PC-9 (cell line): ENCODE measurements at regions of chr20 and their contacts with region 1.

Region 1: DNA sequence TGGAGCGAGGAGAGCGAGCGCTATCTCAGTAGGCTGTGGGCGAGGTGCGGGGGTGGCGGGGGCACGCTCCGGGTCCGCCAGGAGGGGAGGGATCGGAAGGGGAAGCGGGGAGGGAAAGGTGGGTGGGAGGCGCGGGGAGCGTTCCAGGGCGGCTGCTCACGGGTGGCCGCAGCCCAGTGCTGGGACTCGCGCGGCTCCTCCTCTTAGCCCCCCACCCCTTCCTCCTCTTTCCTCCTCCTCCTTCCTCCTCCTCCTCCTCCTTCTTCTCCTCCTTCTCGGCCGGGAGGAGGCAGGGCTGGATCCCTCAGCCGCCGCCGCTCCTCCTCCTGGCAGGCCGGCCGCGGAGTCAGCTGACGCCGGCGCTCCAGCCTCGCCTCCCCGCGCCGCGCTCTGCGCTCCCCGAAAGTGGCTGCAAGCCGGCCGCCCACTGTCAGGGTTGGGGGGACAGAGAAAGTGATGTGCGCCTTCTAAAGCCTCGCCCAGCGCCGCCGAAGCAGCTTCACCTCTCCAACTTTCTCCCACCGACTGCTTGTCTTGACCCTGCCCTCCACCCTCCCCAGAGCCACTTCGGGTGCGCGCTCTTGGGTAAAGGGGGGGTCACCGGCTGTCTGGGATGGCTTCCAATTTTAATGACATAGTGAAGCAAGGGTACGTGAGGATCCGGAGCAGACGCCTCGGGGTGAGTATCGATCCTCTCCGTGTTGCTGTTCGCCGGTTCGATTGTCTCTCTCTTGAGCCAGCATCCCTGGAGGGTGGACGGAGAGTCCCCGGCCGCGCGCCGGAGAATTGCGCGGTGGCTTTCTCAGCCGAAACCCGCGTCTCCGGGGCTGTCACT is at the start of gene DOK5:
- DNase-seq: no peak
- H3K4me3 ChIP-seq: no peak within 1 kb of the TSS
- H3K27ac ChIP-seq: no peak within 1 kb of the TSS
- H3K4me1 ChIP-seq: no peaks in the 10 kb centered on the region
- H3K27me3 ChIP-seq: peaks cover 18% of the 10 kb centered on the region
- CTCF ChIP-seq: no peak
- total RNA-seq, gene DOK5: not detected in 2 replicates

Region 2: GRCh38 chr20:54207743-54208547 is 267.6 kb before region 1 on chr20 and contains the start of gene PFDN4:
- CTCF ChIA-PET with region 1: interaction called, 10 read pairs
- POLR2A ChIA-PET with region 1: no interaction called
- intact Hi-C with region 1: no loop called
- DNase-seq: peak; percentile 73 to 92
- H3K4me3 ChIP-seq: peak within 1 kb of the TSS; percentile 73
- H3K27ac ChIP-seq: peak within 1 kb of the TSS; percentile 86
- H3K4me1 ChIP-seq: peaks cover 15% of the 10 kb centered on the region
- H3K27me3 ChIP-seq: no peaks in the 10 kb centered on the region
- CTCF ChIP-seq: peak; percentile 92
- total RNA-seq, gene PFDN4: 44.1 and 49.5 TPM in 2 replicates